Caco-2 (cell line): ENCODE measurements at regions of chr5 and their contacts with region 1.

Region 1: DNA sequence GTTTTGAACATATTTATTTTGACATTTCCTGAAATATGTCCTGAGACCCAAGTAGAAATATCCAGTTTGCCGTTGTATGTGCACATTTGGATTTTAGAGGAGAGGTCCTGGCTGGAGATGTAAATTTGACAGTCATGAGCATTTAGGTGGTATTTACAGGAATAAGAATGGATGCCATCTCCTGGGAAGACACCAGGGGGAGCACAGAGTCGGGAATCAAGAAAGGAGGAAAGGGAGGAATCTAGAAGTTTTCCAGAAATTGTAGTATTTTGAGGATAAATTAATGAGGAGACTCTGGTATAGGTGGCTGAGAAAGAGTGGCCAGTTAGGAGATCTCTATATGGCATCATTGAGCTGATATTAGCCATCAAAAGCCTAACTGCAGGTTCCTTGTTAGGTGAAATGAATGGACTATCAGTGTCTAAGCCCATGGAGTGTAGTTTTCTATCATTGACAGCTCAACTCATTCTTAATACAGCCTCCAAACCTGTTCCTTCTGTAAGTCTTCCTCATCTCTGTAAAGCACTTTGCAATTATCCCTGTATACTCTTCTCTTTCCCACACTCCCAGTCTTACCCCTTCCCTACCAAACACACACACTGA is 7.2 kb downstream of the GAPT start:
- DNase-seq: peak in 1 of 2 experiments; percentile 64
- H3K4me3 ChIP-seq: no peak overlapping the region
- H3K4me3 Mint-ChIP-seq: no peak overlapping the region
- H3K27ac Mint-ChIP-seq: no peak overlapping the region
- H3K4me1 ChIP-seq: peaks cover 20% of the 10 kb centered on the region
- H3K4me1 Mint-ChIP-seq: peaks cover 36% of the 10 kb centered on the region
- H3K27me3 ChIP-seq: no peaks in the 10 kb centered on the region
- H3K27me3 Mint-ChIP-seq: no peaks in the 10 kb centered on the region
- CTCF ChIP-seq: peak; percentile 76 to 80

Region 2: DNA sequence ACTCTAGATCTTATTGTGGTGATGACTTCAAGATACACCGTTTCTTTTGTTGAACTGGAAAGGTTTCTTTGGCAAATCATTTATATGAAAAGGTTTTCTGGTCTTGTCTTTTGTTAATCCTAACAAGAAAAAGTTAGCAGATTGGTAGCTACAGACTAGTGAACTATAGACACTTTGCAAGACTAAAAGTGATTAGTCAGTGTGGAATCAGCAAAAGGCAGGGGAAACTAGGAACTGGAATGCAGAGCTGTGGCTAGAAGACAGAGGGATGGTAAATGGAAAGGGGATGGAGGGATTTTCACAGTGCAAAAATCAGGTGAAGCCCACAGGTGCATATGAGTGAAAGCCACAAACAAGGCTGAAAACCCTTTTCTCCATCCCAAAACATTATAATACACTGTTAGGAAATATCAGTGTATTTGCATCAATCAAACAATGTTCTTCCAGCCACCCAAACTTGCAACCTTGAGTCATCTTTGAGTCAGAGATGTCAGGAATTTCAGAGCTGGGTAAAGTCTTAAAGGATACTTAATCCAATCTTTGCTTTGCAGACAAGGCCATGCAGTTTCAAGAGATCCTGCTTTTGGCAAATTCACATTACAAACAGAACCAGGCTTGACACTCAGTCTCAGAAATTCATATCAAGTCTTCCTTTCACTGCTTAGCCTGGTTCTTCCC is 91.3 kb before region 1 on chr5:
- CTCF ChIA-PET with region 1: no interaction called
- POLR2A ChIA-PET with region 1: no interaction called
- intact Hi-C with region 1: no loop called
- DNase-seq: no peak
- H3K4me3 ChIP-seq: no peak overlapping the region
- H3K4me3 Mint-ChIP-seq: no peak overlapping the region
- H3K27ac Mint-ChIP-seq: no peak overlapping the region
- H3K4me1 ChIP-seq: peaks cover 6% of the 10 kb centered on the region
- H3K4me1 Mint-ChIP-seq: peaks cover 9% of the 10 kb centered on the region
- H3K27me3 ChIP-seq: no peaks in the 10 kb centered on the region
- H3K27me3 Mint-ChIP-seq: no peaks in the 10 kb centered on the region
- CTCF ChIP-seq: no peak

Region 3: DNA sequence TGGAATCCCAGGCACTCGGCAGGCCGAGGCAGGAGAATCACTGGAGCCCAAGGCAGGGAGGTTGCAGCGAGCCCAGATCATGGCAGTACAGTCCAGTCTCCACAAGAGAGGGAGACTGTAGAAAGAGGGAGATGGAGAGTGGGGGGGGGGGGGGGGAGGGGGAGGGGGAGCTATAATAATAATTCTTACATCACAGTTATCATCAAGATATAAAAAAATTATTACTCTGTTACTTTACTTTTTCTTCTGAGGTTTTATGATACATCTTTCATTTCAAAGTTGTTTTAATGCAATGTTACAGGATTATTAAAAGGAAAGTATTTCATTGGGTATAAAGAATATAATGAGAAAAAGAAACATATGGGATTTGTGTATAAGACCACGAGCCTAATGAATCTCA is 66.6 kb after region 1 on chr5:
- CTCF ChIA-PET with region 1: no interaction called
- POLR2A ChIA-PET with region 1: no interaction called
- intact Hi-C with region 1: loop called (anchors 5 kb)
- DNase-seq: no peak
- H3K4me3 ChIP-seq: no peak overlapping the region
- H3K4me3 Mint-ChIP-seq: no peak overlapping the region
- H3K27ac Mint-ChIP-seq: no peak overlapping the region
- H3K4me1 ChIP-seq: 0 out of 2 replicates have a peak, but pooled peaks cover 4% of the 10 kb centered on the region
- H3K4me1 Mint-ChIP-seq: no peaks in the 10 kb centered on the region
- H3K27me3 ChIP-seq: no peaks in the 10 kb centered on the region
- H3K27me3 Mint-ChIP-seq: no peaks in the 10 kb centered on the region
- CTCF ChIP-seq: no peak

Region 4: GRCh38 chr5:58582803-58583491 is 84.5 kb after region 1 on chr5 and contains the start of gene RAB3C:
- CTCF ChIA-PET with region 1: no interaction called
- POLR2A ChIA-PET with region 1: no interaction called
- intact Hi-C with region 1: loop called (anchors 5 kb)
- DNase-seq: peak; percentile 93 to 94
- H3K4me3 ChIP-seq: peak within 1 kb of the TSS; percentile 51
- H3K4me3 Mint-ChIP-seq: peak within 1 kb of the TSS; percentile 94
- H3K27ac Mint-ChIP-seq: no peak within 1 kb of the TSS
- H3K4me1 ChIP-seq: no peaks in the 10 kb centered on the region
- H3K4me1 Mint-ChIP-seq: peaks cover 6% of the 10 kb centered on the region
- H3K27me3 ChIP-seq: no peaks in the 10 kb centered on the region; the same call in 1 of the 2 replicates
- H3K27me3 Mint-ChIP-seq: peaks cover 6% of the 10 kb centered on the region
- CTCF ChIP-seq: no peak
- total RNA-seq, gene RAB3C: 0.05 TPM in 1 of 2 replicates, not detected in the other

Region 5: GRCh38 chr5:58717303-58718007 is 219.0 kb after region 1 on chr5:
- CTCF ChIA-PET with region 1: interaction called, 4 read pairs
- POLR2A ChIA-PET with region 1: no interaction called
- intact Hi-C with region 1: loop called (anchors 1 kb)
- DNase-seq: peak in 1 of 2 experiments; percentile 17
- H3K4me3 ChIP-seq: no peak overlapping the region
- H3K4me3 Mint-ChIP-seq: no peak overlapping the region
- H3K27ac Mint-ChIP-seq: no peak overlapping the region
- H3K4me1 ChIP-seq: no peaks in the 10 kb centered on the region
- H3K4me1 Mint-ChIP-seq: no peaks in the 10 kb centered on the region
- H3K27me3 ChIP-seq: no peaks in the 10 kb centered on the region
- H3K27me3 Mint-ChIP-seq: peaks cover 13% of the 10 kb centered on the region
- CTCF ChIP-seq: no peak

Region 6: GRCh38 chr5:58810086-58810485 is 311.6 kb after region 1 on chr5:
- CTCF ChIA-PET with region 1: interaction called, 3 read pairs
- POLR2A ChIA-PET with region 1: no interaction called
- intact Hi-C with region 1: loop called (anchors 5 kb)
- DNase-seq: no peak
- H3K4me3 ChIP-seq: no peak overlapping the region
- H3K4me3 Mint-ChIP-seq: no peak overlapping the region
- H3K27ac Mint-ChIP-seq: no peak overlapping the region
- H3K4me1 ChIP-seq: no peaks in the 10 kb centered on the region
- H3K4me1 Mint-ChIP-seq: no peaks in the 10 kb centered on the region
- H3K27me3 ChIP-seq: no peaks in the 10 kb centered on the region
- H3K27me3 Mint-ChIP-seq: peaks cover 6% of the 10 kb centered on the region
- CTCF ChIP-seq: no peak